ENCODE measurements at regions of chr6 and their contacts with region 1.

Region 1: DNA sequence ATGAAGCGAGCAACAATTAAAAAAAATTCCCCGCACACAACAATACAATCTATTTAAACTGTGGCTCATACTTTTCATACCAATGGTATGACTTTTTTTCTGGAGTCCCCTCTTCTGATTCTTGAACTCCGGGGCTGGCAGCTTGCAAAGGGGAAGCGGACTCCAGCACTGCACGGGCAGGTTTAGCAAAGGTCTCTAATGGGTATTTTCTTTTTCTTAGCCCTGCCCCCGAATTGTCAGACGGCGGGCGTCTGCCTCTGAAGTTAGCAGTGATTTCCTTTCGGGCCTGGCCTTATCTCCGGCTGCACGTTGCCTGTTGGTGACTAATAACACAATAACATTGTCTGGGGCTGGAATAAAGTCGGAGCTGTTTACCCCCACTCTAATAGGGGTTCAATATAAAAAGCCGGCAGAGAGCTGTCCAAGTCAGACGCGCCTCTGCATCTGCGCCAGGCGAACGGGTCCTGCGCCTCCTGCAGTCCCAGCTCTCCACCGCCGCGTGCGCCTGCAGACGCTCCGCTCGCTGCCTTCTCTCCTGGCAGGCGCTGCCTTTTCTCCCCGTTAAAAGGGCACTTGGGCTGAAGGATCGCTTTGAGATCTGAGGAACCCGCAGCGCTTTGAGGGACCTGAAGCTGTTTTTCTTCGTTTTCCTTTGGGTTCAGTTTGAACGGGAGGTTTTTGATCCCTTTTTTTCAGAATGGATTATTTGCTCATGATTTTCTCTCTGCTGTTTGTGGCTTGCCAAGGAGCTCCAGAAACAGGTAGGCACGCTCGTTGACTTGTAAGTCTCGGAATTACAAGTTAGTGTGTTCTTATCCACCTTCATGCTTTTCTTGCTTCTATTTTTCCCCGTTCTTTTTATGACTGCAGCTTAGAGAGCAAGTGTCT is at the start of gene EDN1:
- DNase-seq: no peak
- H3K4me3 ChIP-seq: peak within 1 kb of the TSS; percentile 45 to 47
- H3K27ac ChIP-seq: peak within 1 kb of the TSS; percentile 58
- H3K4me1 ChIP-seq: peaks cover 18% of the 10 kb centered on the region
- H3K27me3 ChIP-seq: no peaks in the 10 kb centered on the region
- CTCF ChIP-seq: peak in 1 of 3 experiments; percentile 22
- POLR2A ChIP-seq: peak in 1 of 2 donors; percentile 8
- total RNA-seq, gene EDN1: 7.1 TPM

Region 2: DNA sequence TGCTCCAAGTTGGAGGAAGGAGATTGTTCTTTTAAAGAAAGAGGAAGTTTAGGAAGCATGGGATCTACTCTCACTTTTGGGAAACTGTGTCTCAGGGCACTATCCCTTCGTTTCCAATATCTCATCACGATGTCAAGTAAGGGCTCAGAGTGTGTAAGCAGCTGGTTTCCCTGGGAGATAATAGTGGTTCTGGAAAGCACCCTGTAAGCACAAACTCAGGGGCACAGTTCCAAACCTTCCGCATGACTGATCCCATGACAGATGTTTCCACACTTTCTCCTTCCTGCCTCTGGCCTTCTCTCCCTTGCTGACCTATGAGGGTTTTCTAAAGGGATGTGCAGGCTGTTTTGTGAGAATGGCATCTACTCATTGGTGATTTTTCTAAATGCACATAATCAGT is 545.4 kb before region 1 on chr6:
- intact Hi-C with region 1: no loop called
- DNase-seq: no peak
- H3K4me3 ChIP-seq: no peak overlapping the region
- H3K27ac ChIP-seq: peak overlapping the region; percentile 80
- H3K4me1 ChIP-seq: no peaks in the 10 kb centered on the region
- H3K27me3 ChIP-seq: no peaks in the 10 kb centered on the region
- CTCF ChIP-seq: no peak
- POLR2A ChIP-seq: no peak

Region 3: DNA sequence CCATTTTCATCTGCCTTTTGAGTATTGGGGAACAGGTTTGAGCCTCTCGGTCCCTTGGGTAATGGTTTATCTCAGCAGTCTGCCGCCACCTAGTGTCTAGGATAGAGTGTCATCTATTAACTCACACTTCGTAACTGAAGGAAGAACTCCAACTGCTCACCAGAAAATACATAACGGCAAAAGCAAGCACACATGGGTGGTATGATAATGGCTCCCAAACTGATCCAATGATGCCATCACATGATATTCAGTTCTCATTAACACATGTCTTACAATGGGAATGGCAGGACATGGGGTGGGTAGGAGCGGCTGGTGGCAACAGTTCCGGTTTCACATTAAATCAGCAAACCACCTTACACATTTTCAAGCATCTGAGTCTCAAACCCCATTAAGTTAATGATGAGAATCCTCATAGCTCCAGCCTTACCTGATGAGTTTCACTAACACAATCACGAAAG is 315.7 kb after region 1 on chr6:
- intact Hi-C with region 1: loop called (anchors 10 kb)
- DNase-seq: no peak
- H3K4me3 ChIP-seq: no peak overlapping the region
- H3K27ac ChIP-seq: no peak overlapping the region
- H3K4me1 ChIP-seq: peaks cover 11% of the 10 kb centered on the region
- H3K27me3 ChIP-seq: no peaks in the 10 kb centered on the region
- CTCF ChIP-seq: peak; percentile 41 to 61 (median 46)
- POLR2A ChIP-seq: no peak